Heart left ventricle (tissue), 16 donors: ENCODE measurements at regions of chr4 and their contacts with region 1.

Region 1: GRCh38 chr4:158729716-158730559 is 6.7 kb upstream of the PPID start:
- DNase-seq: peak in 4 of 5 donors; percentile 66 to 75 (median 68)
- ATAC-seq: peak; percentile 88 to 97 (median 94)
- H3K4me3 ChIP-seq: no peak overlapping the region
- H3K27ac ChIP-seq: no peak overlapping the region
- H3K4me1 ChIP-seq: peaks cover 0 to 6% (median 0%) of the 10 kb centered on the region in 12 donors
- H3K27me3 ChIP-seq: no peaks in the 10 kb centered on the region
- CTCF ChIP-seq: peak; percentile 80 to 98 (median 90)
- POLR2A ChIP-seq: no peak

Region 2: GRCh38 chr4:158850800-158851644 is 121.1 kb after region 1 on chr4:
- intact Hi-C with region 1: loop called (anchors 1 to 2 kb)
- DNase-seq: no peak
- ATAC-seq: no peak
- H3K4me3 ChIP-seq: no peak overlapping the region
- H3K27ac ChIP-seq: peak overlapping the region in 1 of 12 donors; percentile 1
- H3K4me1 ChIP-seq: peaks cover 0 to 40% (median 9%) of the 10 kb centered on the region in 12 donors
- H3K27me3 ChIP-seq: no peaks in the 10 kb centered on the region
- CTCF ChIP-seq: peak; percentile 56 to 84 (median 72)
- POLR2A ChIP-seq: no peak

Region 3: GRCh38 chr4:158856852-158857251 is 126.9 kb after region 1 on chr4:
- intact Hi-C with region 1: loop called in 1 of 10 experiments (anchors 1 kb)
- DNase-seq: no peak
- ATAC-seq: peak; percentile 18 to 68 (median 60)
- H3K4me3 ChIP-seq: no peak overlapping the region
- H3K27ac ChIP-seq: no peak overlapping the region
- H3K4me1 ChIP-seq: peaks cover 0 to 16% (median 0%) of the 10 kb centered on the region in 12 donors
- H3K27me3 ChIP-seq: no peaks in the 10 kb centered on the region
- CTCF ChIP-seq: peak; percentile 39 to 71 (median 59)
- POLR2A ChIP-seq: no peak

Region 4: GRCh38 chr4:158929939-158930638 is 200.2 kb after region 1 on chr4:
- intact Hi-C with region 1: no loop called
- DNase-seq: no peak
- ATAC-seq: no peak
- H3K4me3 ChIP-seq: peak overlapping the region in 2 of 12 donors; percentile 15 to 27
- H3K27ac ChIP-seq: no peak overlapping the region
- H3K4me1 ChIP-seq: no peaks in the 10 kb centered on the region
- H3K27me3 ChIP-seq: no peaks in the 10 kb centered on the region
- CTCF ChIP-seq: no peak
- POLR2A ChIP-seq: no peak

Region 5: DNA sequence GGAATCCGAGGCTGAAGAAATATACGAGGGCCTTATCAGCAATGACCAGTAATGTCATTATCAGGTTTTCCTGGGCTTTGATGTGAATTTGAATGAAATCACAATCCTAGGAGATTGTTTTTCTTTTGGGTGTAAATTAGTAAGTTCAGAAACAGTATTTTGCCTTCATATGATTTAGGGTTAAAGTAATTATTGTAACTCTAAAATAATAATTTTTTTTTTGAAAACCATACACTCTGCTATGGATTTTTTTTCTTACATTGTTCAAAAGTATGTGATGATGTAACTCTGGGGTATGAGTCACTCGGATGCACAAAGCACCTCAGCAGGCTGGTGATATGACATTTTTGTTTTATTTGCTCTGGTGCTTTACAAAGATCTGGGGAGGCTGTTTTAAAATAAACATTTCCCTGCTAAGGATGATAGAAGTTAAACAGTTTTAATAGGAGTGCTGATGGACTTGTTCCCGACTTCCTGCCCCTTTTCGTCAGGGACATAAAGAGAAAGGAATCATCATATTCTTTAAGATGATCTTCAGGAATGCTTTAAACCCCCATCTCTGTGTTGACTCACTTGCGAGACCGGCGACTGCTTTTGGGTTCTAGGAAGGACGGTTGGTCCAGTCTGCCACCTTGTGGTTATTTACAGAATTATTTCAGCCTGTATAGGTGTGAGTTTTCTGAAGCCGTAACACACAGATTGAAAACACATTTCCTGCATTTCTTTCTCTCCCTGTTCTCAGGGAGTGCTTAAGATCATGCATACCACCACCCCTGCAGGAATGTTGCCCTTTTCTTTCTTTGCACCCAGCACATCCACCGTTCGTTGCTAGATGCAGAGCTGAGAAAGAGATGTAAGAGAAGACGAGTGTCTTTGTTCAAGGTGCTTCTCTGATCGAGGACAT is 445.4 kb after region 1 on chr4:
- intact Hi-C with region 1: loop called in 7 of 10 experiments (anchors 5 to 10 kb)
- DNase-seq: peak in 4 of 5 donors; percentile 58 to 74 (median 66)
- ATAC-seq: peak; percentile 69 to 90 (median 88)
- H3K4me3 ChIP-seq: peak overlapping the region in 7 of 12 donors; percentile 4 to 19 (median 16)
- H3K27ac ChIP-seq: peak overlapping the region in 11 of 12 donors; percentile 13 to 75 (median 50)
- H3K4me1 ChIP-seq: peaks cover 11 to 98% (median 85%) of the 10 kb centered on the region in 12 donors
- H3K27me3 ChIP-seq: no peaks in the 10 kb centered on the region
- CTCF ChIP-seq: peak; percentile 69 to 89 (median 84)
- POLR2A ChIP-seq: no peak

Region 6: GRCh38 chr4:159201168-159201567 is 471.2 kb after region 1 on chr4:
- intact Hi-C with region 1: loop called in 9 of 10 experiments (anchors 1 to 10 kb)
- DNase-seq: no peak
- ATAC-seq: peak; percentile 25 to 54 (median 42)
- H3K4me3 ChIP-seq: peak overlapping the region in 3 of 12 donors; percentile 1 to 3 (median 2)
- H3K27ac ChIP-seq: peak overlapping the region; percentile 35 to 79 (median 71)
- H3K4me1 ChIP-seq: peaks cover 6 to 80% (median 52%) of the 10 kb centered on the region in 12 donors
- H3K27me3 ChIP-seq: no peaks in the 10 kb centered on the region
- CTCF ChIP-seq: no peak
- POLR2A ChIP-seq: no peak

Region 7: DNA sequence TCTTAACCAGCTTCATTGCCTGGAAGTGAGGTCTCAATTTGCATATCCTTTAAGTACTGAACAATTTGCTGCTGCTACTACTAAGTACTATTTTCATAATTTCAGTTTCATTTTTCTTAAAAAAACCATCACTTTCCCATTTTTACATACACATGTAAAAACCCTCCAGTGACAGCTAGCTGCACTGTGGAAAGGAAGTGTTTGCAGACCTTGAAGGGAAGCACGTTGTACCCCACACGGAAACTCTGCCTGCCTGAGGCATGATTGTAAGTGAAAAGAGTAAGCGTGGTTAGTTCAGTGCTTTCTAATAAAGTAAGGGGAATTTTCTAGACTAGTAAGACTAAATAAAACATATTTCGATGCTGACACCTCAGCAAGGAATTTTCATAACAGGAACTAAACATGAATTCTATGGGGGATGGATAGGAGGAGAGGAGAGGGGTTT is 476.5 kb after region 1 on chr4:
- intact Hi-C with region 1: loop called (anchors 1 to 10 kb)
- DNase-seq: no peak
- ATAC-seq: no peak
- H3K4me3 ChIP-seq: no peak overlapping the region
- H3K27ac ChIP-seq: peak overlapping the region in 4 of 12 donors; percentile 8 to 51 (median 36)
- H3K4me1 ChIP-seq: peaks cover 9 to 86% (median 47%) of the 10 kb centered on the region in 12 donors
- H3K27me3 ChIP-seq: no peaks in the 10 kb centered on the region
- CTCF ChIP-seq: no peak
- POLR2A ChIP-seq: no peak

Region 8: GRCh38 chr4:159455675-159456237 is 725.8 kb after region 1 on chr4:
- intact Hi-C with region 1: loop called in 1 of 10 experiments (anchors 5 kb)
- DNase-seq: no peak
- ATAC-seq: no peak
- H3K4me3 ChIP-seq: no peak overlapping the region
- H3K27ac ChIP-seq: no peak overlapping the region
- H3K4me1 ChIP-seq: no peaks in the 10 kb centered on the region
- H3K27me3 ChIP-seq: no peaks in the 10 kb centered on the region
- CTCF ChIP-seq: peak; percentile 44 to 71 (median 57)
- POLR2A ChIP-seq: no peak